B cell (primary cell): ENCODE measurements at regions of chr1 and their contacts with region 1.

Region 1: DNA sequence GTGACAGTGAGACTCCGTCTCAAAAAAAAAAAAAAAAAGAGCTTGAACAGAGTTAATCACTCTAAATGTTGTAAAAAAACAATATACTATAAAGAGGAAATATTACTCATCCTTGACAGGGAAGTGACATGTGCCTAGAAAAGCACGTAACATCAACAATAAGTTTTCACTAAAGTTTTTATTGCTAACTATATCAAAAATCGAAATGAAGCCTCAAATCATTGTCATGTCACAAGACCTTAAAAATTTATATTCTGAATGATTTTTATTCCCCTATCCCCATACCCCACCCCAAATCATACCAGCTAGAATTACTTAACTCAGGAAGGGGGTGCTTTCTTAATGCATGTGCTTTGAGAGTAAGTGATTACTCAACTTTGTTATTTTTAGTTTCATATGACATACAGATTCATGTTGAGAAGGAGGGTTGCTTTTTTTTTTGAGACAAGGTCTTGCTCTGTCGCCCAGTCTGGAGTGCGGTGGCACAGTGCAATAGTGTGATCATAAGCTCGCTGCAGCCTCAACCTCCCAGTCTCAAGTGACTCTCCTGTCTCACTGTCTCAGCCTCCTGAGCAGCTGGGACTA is 53.6 kb upstream of the MUTYH start:
- DNase-seq: peak; percentile 82
- ATAC-seq: peak; percentile 82
- H3K4me3 ChIP-seq: peak overlapping the region in 4 of 5 experiments; percentile 1 to 52 (median 24)
- H3K4me3 Mint-ChIP-seq: peak overlapping the region; percentile 82
- H3K27ac ChIP-seq: peak overlapping the region; percentile 96 to 99
- H3K27ac Mint-ChIP-seq: peak overlapping the region; percentile 99
- H3K4me1 ChIP-seq: peaks cover 35 to 37% of the 10 kb centered on the region in 2 donors
- H3K4me1 Mint-ChIP-seq: peaks cover 44% of the 10 kb centered on the region
- H3K27me3 ChIP-seq: no peaks in the 10 kb centered on the region
- H3K27me3 Mint-ChIP-seq: no peaks in the 10 kb centered on the region
- CTCF ChIP-seq: no peak

Region 2: DNA sequence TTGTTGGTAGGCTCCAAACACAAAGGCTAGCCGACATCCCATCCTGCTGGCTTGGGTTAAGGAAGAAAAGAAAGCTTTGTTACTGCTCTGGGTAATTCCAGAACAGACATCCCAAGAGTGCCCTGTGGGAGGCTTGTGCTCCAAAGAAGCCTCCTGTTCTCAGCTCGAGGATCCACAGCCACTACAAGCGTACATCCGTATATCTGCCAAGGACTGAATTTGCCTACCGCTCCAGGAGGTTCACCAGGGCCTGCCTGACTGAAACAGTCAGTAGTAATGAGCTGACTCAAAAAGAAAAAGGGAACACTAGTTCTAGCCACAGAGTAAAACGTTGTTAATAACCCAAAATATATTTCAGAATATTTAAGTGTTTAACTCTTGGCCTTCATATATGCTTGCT is 28.8 kb before region 1 on chr1:
- CTCF ChIA-PET with region 1: interaction called, 20 read pairs
- POLR2A ChIA-PET with region 1: interaction called, 17 read pairs
- intact Hi-C with region 1: no loop called
- DNase-seq: no peak
- ATAC-seq: no peak
- H3K4me3 ChIP-seq: no peak overlapping the region
- H3K4me3 Mint-ChIP-seq: no peak overlapping the region
- H3K27ac ChIP-seq: no peak overlapping the region
- H3K27ac Mint-ChIP-seq: peak overlapping the region; percentile 54
- H3K4me1 ChIP-seq: peaks cover 5 to 6% of the 10 kb centered on the region in 2 donors
- H3K4me1 Mint-ChIP-seq: peaks cover 21% of the 10 kb centered on the region
- H3K27me3 ChIP-seq: no peaks in the 10 kb centered on the region
- H3K27me3 Mint-ChIP-seq: no peaks in the 10 kb centered on the region
- CTCF ChIP-seq: no peak

Region 3: GRCh38 chr1:45375104-45376090 is 18.4 kb before region 1 on chr1:
- CTCF ChIA-PET with region 1: interaction called, 3 read pairs
- POLR2A ChIA-PET with region 1: no interaction called
- intact Hi-C with region 1: loop called (anchors 1 kb)
- DNase-seq: no peak
- ATAC-seq: no peak
- H3K4me3 ChIP-seq: no peak overlapping the region
- H3K4me3 Mint-ChIP-seq: no peak overlapping the region
- H3K27ac ChIP-seq: peak overlapping the region in 1 of 2 donors; percentile 40
- H3K27ac Mint-ChIP-seq: peak overlapping the region; percentile 29
- H3K4me1 ChIP-seq: peaks cover 25 to 33% of the 10 kb centered on the region in 2 donors
- H3K4me1 Mint-ChIP-seq: peaks cover 38% of the 10 kb centered on the region
- H3K27me3 ChIP-seq: no peaks in the 10 kb centered on the region
- H3K27me3 Mint-ChIP-seq: no peaks in the 10 kb centered on the region
- CTCF ChIP-seq: no peak

Region 4: GRCh38 chr1:45410850-45411314 is 17.1 kb after region 1 on chr1:
- CTCF ChIA-PET with region 1: interaction called, 7 read pairs
- POLR2A ChIA-PET with region 1: interaction called, 11 read pairs
- intact Hi-C with region 1: loop called (anchors 1 kb)
- DNase-seq: no peak
- ATAC-seq: no peak
- H3K4me3 ChIP-seq: no peak overlapping the region
- H3K4me3 Mint-ChIP-seq: peak overlapping the region; percentile 44
- H3K27ac ChIP-seq: peak overlapping the region in 1 of 2 donors; percentile 88
- H3K27ac Mint-ChIP-seq: peak overlapping the region; percentile 86
- H3K4me1 ChIP-seq: peaks cover 60 to 61% of the 10 kb centered on the region in 2 donors
- H3K4me1 Mint-ChIP-seq: peaks cover 72% of the 10 kb centered on the region
- H3K27me3 ChIP-seq: no peaks in the 10 kb centered on the region
- H3K27me3 Mint-ChIP-seq: no peaks in the 10 kb centered on the region
- CTCF ChIP-seq: no peak

Region 5: GRCh38 chr1:45522324-45523104 is 128.7 kb after region 1 on chr1:
- CTCF ChIA-PET with region 1: no interaction called
- POLR2A ChIA-PET with region 1: no interaction called
- intact Hi-C with region 1: no loop called
- DNase-seq: no peak
- ATAC-seq: no peak
- H3K4me3 ChIP-seq: peak overlapping the region; percentile 75 to 97 (median 82)
- H3K4me3 Mint-ChIP-seq: peak overlapping the region; percentile 95
- H3K27ac ChIP-seq: peak overlapping the region; percentile 80 to 82
- H3K27ac Mint-ChIP-seq: peak overlapping the region; percentile 98
- H3K4me1 ChIP-seq: peaks cover 16 to 31% of the 10 kb centered on the region in 2 donors
- H3K4me1 Mint-ChIP-seq: peaks cover 31% of the 10 kb centered on the region
- H3K27me3 ChIP-seq: no peaks in the 10 kb centered on the region
- H3K27me3 Mint-ChIP-seq: no peaks in the 10 kb centered on the region
- CTCF ChIP-seq: no peak

Region 6: GRCh38 chr1:45543581-45544417 is 150.0 kb after region 1 on chr1:
- CTCF ChIA-PET with region 1: no interaction called
- POLR2A ChIA-PET with region 1: no interaction called
- intact Hi-C with region 1: loop called (anchors 1 kb)
- DNase-seq: peak; percentile 94
- ATAC-seq: peak; percentile 90
- H3K4me3 ChIP-seq: peak overlapping the region in 4 of 5 experiments; percentile 22 to 56 (median 30)
- H3K4me3 Mint-ChIP-seq: peak overlapping the region; percentile 81
- H3K27ac ChIP-seq: peak overlapping the region; percentile 78 to 97
- H3K27ac Mint-ChIP-seq: peak overlapping the region; percentile 82
- H3K4me1 ChIP-seq: peaks cover 38 to 57% of the 10 kb centered on the region in 2 donors
- H3K4me1 Mint-ChIP-seq: peaks cover 46% of the 10 kb centered on the region
- H3K27me3 ChIP-seq: no peaks in the 10 kb centered on the region
- H3K27me3 Mint-ChIP-seq: no peaks in the 10 kb centered on the region
- CTCF ChIP-seq: no peak